PC-3 (cell line): ENCODE measurements at regions of chr13 and their contacts with region 1.

Region 1: DNA sequence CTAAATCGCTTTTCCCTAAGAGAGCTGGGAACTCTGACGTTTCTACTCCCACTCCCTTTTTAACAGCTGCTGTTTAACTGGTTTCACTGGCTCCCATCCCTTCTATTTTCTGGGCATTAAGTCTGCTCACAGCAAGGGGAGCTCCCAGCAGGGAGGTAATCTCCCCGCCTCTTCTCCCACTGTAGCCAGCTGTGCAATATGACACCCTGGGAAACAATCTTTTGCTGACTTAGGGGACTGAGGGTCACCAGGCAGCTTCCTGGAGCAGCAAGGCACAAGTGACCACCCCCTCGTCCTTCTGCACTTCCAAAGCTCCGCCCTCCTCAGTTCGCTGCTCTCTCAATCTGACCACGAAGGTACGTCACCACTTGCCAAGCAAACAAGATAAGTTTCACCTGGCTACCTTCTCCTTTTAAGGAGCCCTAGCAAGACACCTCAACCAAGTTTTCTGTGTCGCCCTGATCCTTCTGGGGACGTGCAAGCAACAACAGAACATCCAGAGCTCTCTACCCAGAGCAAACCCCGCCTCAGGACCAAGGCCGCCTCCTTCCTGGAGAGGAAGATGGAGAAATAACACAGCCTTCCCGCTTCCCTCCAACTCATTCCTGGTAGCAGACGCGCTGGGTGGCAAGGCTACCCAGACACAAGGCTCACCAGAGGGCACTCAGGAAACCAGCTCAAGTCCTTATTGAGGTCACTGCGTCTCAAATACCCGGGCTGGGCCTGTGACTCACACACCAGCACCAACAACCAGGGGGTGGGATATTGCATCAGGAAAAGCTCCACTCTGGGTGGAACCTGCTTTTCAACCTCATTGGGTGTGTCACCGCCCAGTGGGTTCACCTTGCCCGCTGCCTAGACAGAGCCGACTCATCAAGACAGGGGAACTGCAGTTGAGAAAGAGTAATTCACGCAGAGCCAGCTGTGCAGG is 92.4 kb downstream of the STK24 start:
- DNase-seq: peak; percentile 97
- ATAC-seq: peak; percentile 90
- H3K4me3 ChIP-seq: peak overlapping the region; percentile 57
- H3K27ac ChIP-seq: peak overlapping the region; percentile 99
- H3K4me1 ChIP-seq: peaks cover 37% of the 10 kb centered on the region
- H3K27me3 ChIP-seq: no peaks in the 10 kb centered on the region
- CTCF ChIP-seq: no peak

Region 2: GRCh38 chr13:98509271-98510155 is 25.0 kb after region 1 on chr13:
- CTCF ChIA-PET with region 1: no interaction called
- POLR2A ChIA-PET with region 1: interaction called, 8 read pairs
- intact Hi-C with region 1: loop called (anchors 2 kb)
- DNase-seq: peak; percentile 74
- ATAC-seq: peak; percentile 92
- H3K4me3 ChIP-seq: 0 out of 2 replicates have a peak overlapping the region, but pooled peaks have one; percentile 22
- H3K27ac ChIP-seq: peak overlapping the region; percentile 91
- H3K4me1 ChIP-seq: peaks cover 48% of the 10 kb centered on the region
- H3K27me3 ChIP-seq: no peaks in the 10 kb centered on the region
- CTCF ChIP-seq: no peak

Region 3: GRCh38 chr13:98535501-98536354 is 51.2 kb after region 1 on chr13:
- CTCF ChIA-PET with region 1: no interaction called
- POLR2A ChIA-PET with region 1: interaction called, 7 read pairs
- intact Hi-C with region 1: loop called (anchors 2 kb)
- DNase-seq: peak; percentile 76
- ATAC-seq: peak; percentile 75
- H3K4me3 ChIP-seq: peak overlapping the region; percentile 32; the same call in 1 of the 2 replicates
- H3K27ac ChIP-seq: peak overlapping the region; percentile 85
- H3K4me1 ChIP-seq: peaks cover 29% of the 10 kb centered on the region
- H3K27me3 ChIP-seq: no peaks in the 10 kb centered on the region
- CTCF ChIP-seq: no peak

Region 4: DNA sequence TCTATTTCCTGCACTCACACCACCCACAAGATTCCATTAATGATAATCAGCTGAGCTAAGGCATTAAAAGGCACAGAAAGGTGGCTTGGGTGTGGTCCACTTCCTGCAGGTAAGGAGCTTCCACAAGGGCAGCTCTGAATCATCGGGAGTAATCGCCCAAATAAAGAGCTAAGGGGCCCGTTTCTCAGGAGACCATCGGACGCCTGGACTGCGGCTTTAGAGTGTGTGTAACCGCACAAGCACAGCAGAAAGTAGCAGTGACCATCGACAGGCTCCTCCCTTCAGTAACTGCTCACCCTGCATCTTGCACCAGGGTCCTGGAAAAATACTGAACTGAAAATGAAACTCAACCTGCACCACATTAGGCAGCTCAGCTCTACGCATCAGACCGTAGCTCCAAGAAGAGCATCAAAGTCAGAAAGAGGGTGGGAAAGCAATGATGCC is 86.4 kb after region 1 on chr13:
- CTCF ChIA-PET with region 1: no interaction called
- POLR2A ChIA-PET with region 1: interaction called, 14 read pairs
- intact Hi-C with region 1: no loop called
- DNase-seq: peak; percentile 89
- ATAC-seq: peak; percentile 75
- H3K4me3 ChIP-seq: peak overlapping the region; percentile 54
- H3K27ac ChIP-seq: peak overlapping the region; percentile 81
- H3K4me1 ChIP-seq: peaks cover 50% of the 10 kb centered on the region
- H3K27me3 ChIP-seq: no peaks in the 10 kb centered on the region
- CTCF ChIP-seq: no peak

Region 5: GRCh38 chr13:98576963-98577822 is 92.6 kb after region 1 on chr13 and contains the start of gene STK24:
- CTCF ChIA-PET with region 1: no interaction called
- POLR2A ChIA-PET with region 1: interaction called, 15 read pairs
- intact Hi-C with region 1: loop called (anchors 1 kb)
- DNase-seq: peak; percentile 69
- ATAC-seq: peak; percentile 62
- H3K4me3 ChIP-seq: peak within 1 kb of the TSS; percentile 99
- H3K27ac ChIP-seq: peak within 1 kb of the TSS; percentile 55
- H3K4me1 ChIP-seq: peaks cover 30% of the 10 kb centered on the region
- H3K27me3 ChIP-seq: no peaks in the 10 kb centered on the region
- CTCF ChIP-seq: no peak
- total RNA-seq, gene STK24: 52.4 and 57.0 TPM in 2 replicates

Region 6: GRCh38 chr13:100447831-100448230 is 1963.3 kb after region 1 on chr13:
- CTCF ChIA-PET with region 1: no interaction called
- POLR2A ChIA-PET with region 1: no interaction called
- intact Hi-C with region 1: no loop called
- DNase-seq: no peak
- ATAC-seq: no peak
- H3K4me3 ChIP-seq: no peak overlapping the region
- H3K27ac ChIP-seq: no peak overlapping the region
- H3K4me1 ChIP-seq: no peaks in the 10 kb centered on the region
- H3K27me3 ChIP-seq: no peaks in the 10 kb centered on the region
- CTCF ChIP-seq: no peak